ENCODE measurements at regions of chrX and their contacts with region 1.

Region 1: DNA sequence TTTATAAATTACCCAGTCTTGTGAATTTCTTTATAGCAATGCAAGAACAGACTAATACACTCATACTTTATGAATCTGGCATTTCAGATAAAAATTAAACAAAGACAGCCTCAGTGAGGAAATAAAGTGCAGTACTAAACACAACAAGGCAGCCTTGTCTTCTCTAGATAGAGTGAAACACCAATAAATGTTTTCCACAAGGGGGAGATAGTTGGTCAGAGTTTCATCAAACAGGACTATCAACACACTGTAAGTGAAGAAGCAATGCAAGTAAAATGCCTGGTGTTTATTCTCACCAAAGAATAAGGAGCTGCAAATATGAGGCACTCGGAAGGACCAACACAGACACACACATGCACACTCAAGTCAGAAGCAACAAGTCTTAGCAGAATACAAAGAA is 62.8 kb downstream of the FAM9B start:
- DNase-seq: no peak
- H3K4me3 Mint-ChIP-seq: no peak overlapping the region
- H3K27ac Mint-ChIP-seq: no peak overlapping the region
- H3K4me1 Mint-ChIP-seq: peaks cover 12% of the 10 kb centered on the region
- H3K27me3 Mint-ChIP-seq: no peaks in the 10 kb centered on the region
- CTCF ChIP-seq: no peak

Region 2: GRCh38 chrX:8815464-8816065 is 155.6 kb before region 1 on chrX:
- CTCF ChIA-PET with region 1: no interaction called
- intact Hi-C with region 1: loop called (anchors 5 kb)
- DNase-seq: peak; percentile 45
- H3K4me3 Mint-ChIP-seq: no peak overlapping the region
- H3K27ac Mint-ChIP-seq: no peak overlapping the region
- H3K4me1 Mint-ChIP-seq: no peaks in the 10 kb centered on the region
- H3K27me3 Mint-ChIP-seq: peaks cover 5% of the 10 kb centered on the region
- CTCF ChIP-seq: peak; percentile 43

Region 3: GRCh38 chrX:9164535-9165425 is 193.7 kb after region 1 on chrX:
- CTCF ChIA-PET with region 1: no interaction called
- intact Hi-C with region 1: loop called (anchors 5 kb)
- DNase-seq: peak; percentile 72
- H3K4me3 Mint-ChIP-seq: peak overlapping the region; percentile 56
- H3K27ac Mint-ChIP-seq: peak overlapping the region; percentile 95
- H3K4me1 Mint-ChIP-seq: peaks cover 44% of the 10 kb centered on the region
- H3K27me3 Mint-ChIP-seq: no peaks in the 10 kb centered on the region
- CTCF ChIP-seq: no peak

Region 4: DNA sequence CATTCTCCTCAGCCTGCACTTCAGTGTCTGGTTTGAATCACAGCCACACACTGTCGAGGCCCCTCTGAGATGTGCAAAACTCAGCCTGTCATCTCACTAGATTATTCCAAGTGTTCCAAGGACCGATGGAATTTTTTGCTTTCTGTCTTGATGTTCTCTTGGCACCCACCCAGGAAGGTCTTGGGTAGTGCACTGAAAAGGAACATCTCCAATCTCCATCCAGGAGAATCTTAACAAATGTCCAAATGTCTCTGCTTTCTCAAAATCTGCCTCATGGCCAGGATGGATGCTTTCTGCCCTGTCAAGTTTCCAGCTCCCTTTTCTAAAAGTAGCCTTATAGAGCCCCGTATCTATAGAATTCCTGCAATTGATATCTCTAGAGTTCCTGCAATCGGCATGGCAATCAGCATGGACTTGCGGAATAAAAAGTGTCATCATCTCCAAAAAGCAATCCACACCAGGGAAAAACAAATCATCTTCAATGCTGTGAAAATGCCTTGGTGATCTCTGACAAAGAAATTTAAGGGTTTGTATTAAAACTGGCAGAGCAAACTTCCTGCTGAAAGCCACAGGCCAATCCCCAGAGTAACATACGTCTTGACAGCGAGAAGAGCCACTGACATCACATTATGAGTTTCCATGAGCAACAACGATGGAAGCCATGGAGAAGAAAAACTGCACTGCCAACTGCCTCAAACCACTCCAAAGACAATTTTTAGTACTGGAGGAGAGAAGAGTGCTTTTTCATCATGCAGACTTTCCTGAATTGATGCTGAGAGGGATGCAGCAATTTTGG is 278.1 kb after region 1 on chrX:
- CTCF ChIA-PET with region 1: no interaction called
- intact Hi-C with region 1: no loop called
- DNase-seq: no peak
- H3K4me3 Mint-ChIP-seq: no peak overlapping the region
- H3K27ac Mint-ChIP-seq: no peak overlapping the region
- H3K4me1 Mint-ChIP-seq: no peaks in the 10 kb centered on the region
- H3K27me3 Mint-ChIP-seq: no peaks in the 10 kb centered on the region
- CTCF ChIP-seq: no peak

Region 5: GRCh38 chrX:9341291-9342201 is 370.4 kb after region 1 on chrX:
- CTCF ChIA-PET with region 1: no interaction called
- intact Hi-C with region 1: loop called (anchors 2 kb)
- DNase-seq: no peak
- H3K4me3 Mint-ChIP-seq: peak overlapping the region; percentile 39
- H3K27ac Mint-ChIP-seq: peak overlapping the region; percentile 62
- H3K4me1 Mint-ChIP-seq: peaks cover 9% of the 10 kb centered on the region
- H3K27me3 Mint-ChIP-seq: no peaks in the 10 kb centered on the region
- CTCF ChIP-seq: no peak

Region 6: GRCh38 chrX:9464435-9465371 is 493.6 kb after region 1 on chrX and contains the start of gene TBL1X:
- CTCF ChIA-PET with region 1: interaction called, 4 read pairs
- intact Hi-C with region 1: loop called (anchors 1 kb)
- DNase-seq: peak; percentile 74
- H3K4me3 Mint-ChIP-seq: peak within 1 kb of the TSS; percentile 67
- H3K27ac Mint-ChIP-seq: peak within 1 kb of the TSS; percentile 96
- H3K4me1 Mint-ChIP-seq: peaks cover 33% of the 10 kb centered on the region
- H3K27me3 Mint-ChIP-seq: no peaks in the 10 kb centered on the region
- CTCF ChIP-seq: no peak
- total RNA-seq, gene TBL1X: 24.9 and 25.0 TPM in 2 replicates

Measured in Calu3 (cell line).